Common myeloid progenitor, CD34-positive (primary cell): ENCODE measurements at regions of chr10 and their contacts with region 1.

Region 1: GRCh38 chr10:102652170-102652916 is 8.1 kb downstream of the TRIM8 start:
- DNase-seq: no peak
- H3K4me3 ChIP-seq: peak overlapping the region in 1 of 7 experiments; percentile 8
- H3K27ac ChIP-seq: peak overlapping the region in 1 of 2 experiments; percentile 47
- H3K4me1 ChIP-seq: peaks cover 4 to 62% (median 56%) of the 10 kb centered on the region in 4 experiments
- H3K27me3 ChIP-seq: no peaks in the 10 kb centered on the region

Region 2: GRCh38 chr10:102633292-102633691 is 19.1 kb before region 1 on chr10:
- CTCF ChIA-PET with region 1: no interaction called
- POLR2A ChIA-PET with region 1: no interaction called
- DNase-seq: peak in 2 of 3 donors; percentile 76 to 83
- H3K4me3 ChIP-seq: peak overlapping the region in 2 of 7 experiments; percentile 45 to 48
- H3K27ac ChIP-seq: peak overlapping the region in 1 of 2 experiments; percentile 78
- H3K4me1 ChIP-seq: peaks cover 15 to 77% (median 47%) of the 10 kb centered on the region in 4 experiments
- H3K27me3 ChIP-seq: no peaks in the 10 kb centered on the region

Region 3: DNA sequence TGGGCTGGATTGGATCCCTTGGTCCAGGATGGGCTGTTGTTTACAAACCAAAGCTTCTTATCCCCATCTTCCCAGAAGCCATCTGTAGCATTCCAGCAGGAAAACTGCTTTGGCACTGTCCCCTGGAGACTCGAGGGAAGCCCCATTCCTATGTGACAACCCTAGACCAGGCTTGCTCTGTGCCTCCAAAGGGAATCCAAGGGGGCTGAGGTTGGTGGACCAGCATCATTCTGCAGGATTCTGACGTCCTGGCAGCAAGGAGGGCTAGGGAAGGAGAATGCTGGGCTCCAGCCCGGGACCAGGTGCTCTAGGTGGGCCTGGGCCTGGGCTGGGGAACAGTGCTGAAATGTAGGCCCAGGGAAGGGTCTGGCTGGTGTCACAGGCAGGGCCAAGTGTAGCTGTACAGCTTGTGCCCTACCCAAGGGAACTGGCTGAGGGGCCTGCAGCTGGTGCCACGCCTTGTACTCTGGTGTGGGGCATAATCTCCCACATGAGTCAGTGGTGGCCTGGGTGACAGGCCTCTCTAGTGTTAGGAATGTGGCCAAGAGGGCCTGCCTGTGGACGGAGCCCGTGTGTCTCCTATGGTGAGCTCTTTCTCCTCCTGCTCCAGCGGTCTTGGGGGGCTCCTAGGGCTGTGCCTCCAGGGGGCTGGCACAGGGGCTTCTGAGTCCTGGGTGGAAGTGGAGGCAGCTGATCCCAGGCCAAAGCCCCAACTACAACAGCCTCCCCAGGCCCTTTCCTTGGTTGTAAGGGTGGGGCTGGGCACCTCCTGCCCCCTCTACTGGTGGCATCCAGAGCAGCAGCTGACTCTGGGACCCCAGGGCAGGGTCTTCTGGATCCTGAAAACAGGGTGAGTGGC is 17.1 kb after region 1 on chr10:
- CTCF ChIA-PET with region 1: interaction called, 98 read pairs
- POLR2A ChIA-PET with region 1: interaction called, 3 read pairs
- DNase-seq: peak in 1 of 3 donors; percentile 39
- H3K4me3 ChIP-seq: no peak overlapping the region
- H3K27ac ChIP-seq: no peak overlapping the region
- H3K4me1 ChIP-seq: peaks cover 5 to 45% (median 25%) of the 10 kb centered on the region in 4 experiments
- H3K27me3 ChIP-seq: no peaks in the 10 kb centered on the region